Ovary (tissue), 10 donors: ENCODE measurements at regions of chr9 and their contacts with region 1.

Region 1: GRCh38 chr9:125746017-125746773 is 978 bp upstream of the PBX3 start:
- DNase-seq: peak; percentile 92 to 95 (median 94)
- H3K4me3 ChIP-seq: peak overlapping the region; percentile 77
- H3K27ac ChIP-seq: peak overlapping the region; percentile 87 to 90
- H3K4me1 ChIP-seq: no peaks in the 10 kb centered on the region
- H3K27me3 ChIP-seq: no peaks in the 10 kb centered on the region
- CTCF ChIP-seq: no peak
- EP300 ChIP-seq: no peak
- POLR2A ChIP-seq: peak; percentile 40

Region 2: GRCh38 chr9:125700791-125701190 is 45.4 kb before region 1 on chr9:
- intact Hi-C with region 1: no loop called
- DNase-seq: no peak
- H3K4me3 ChIP-seq: no peak overlapping the region
- H3K27ac ChIP-seq: no peak overlapping the region
- H3K4me1 ChIP-seq: peaks cover under 1% of the 10 kb centered on the region
- H3K27me3 ChIP-seq: no peaks in the 10 kb centered on the region
- CTCF ChIP-seq: no peak
- EP300 ChIP-seq: no peak
- POLR2A ChIP-seq: no peak

Region 3: GRCh38 chr9:125889476-125890419 is 143.6 kb after region 1 on chr9:
- intact Hi-C with region 1: loop called in 2 of 4 experiments (anchors 5 kb)
- DNase-seq: peak; percentile 41 to 72 (median 63)
- H3K4me3 ChIP-seq: peak overlapping the region; percentile 49
- H3K27ac ChIP-seq: peak overlapping the region; percentile 64 to 83
- H3K4me1 ChIP-seq: no peaks in the 10 kb centered on the region
- H3K27me3 ChIP-seq: no peaks in the 10 kb centered on the region
- CTCF ChIP-seq: no peak
- EP300 ChIP-seq: no peak
- POLR2A ChIP-seq: no peak

Region 4: GRCh38 chr9:126228781-126229444 is 482.7 kb after region 1 on chr9:
- intact Hi-C with region 1: loop called in 1 of 4 experiments (anchors 10 kb)
- DNase-seq: peak; percentile 66 to 85 (median 77)
- H3K4me3 ChIP-seq: no peak overlapping the region
- H3K27ac ChIP-seq: no peak overlapping the region
- H3K4me1 ChIP-seq: no peaks in the 10 kb centered on the region
- H3K27me3 ChIP-seq: no peaks in the 10 kb centered on the region
- CTCF ChIP-seq: peak; percentile 67 to 91 (median 82)
- EP300 ChIP-seq: no peak
- POLR2A ChIP-seq: no peak

Region 5: DNA sequence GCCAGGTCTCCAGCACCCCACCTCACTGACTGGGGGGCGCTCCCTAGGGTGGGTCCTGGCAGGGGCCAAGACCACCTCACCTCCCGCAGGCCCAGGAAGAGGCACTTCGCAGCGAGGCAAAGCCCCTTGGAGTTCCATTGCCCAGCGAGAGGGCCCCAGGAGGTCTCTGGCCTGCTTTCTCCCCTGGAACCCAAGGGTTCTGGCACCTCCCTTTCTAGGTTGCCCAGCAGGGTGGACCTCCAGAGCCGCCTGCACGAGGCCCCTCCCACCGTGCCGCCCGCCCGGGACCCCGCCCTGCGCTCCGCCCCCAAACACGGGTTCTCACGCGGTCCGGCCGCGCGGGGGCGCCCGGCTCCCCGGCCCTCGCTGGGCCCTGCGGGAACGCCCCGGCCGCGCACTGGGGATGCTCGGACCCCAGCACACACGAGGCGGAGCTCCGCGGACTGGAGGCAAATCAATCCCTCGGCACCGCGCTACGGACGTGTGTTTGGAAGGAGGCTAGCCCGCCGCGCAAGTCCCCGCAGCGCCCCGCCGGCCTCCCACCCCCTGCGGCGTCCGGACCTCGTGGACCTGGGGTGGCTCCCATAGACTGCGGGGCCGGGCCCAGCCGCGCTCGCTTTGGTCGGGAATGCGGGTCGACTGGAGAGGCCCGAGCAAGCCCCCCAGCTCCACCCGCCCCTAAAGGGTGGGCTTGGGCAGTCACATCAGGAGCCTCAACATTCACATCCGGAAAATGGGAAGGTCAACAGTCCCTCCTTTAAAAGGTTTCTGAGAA is 768.0 kb after region 1 on chr9:
- intact Hi-C with region 1: no loop called
- DNase-seq: peak; percentile 38 to 68 (median 51)
- H3K4me3 ChIP-seq: no peak overlapping the region
- H3K27ac ChIP-seq: no peak overlapping the region
- H3K4me1 ChIP-seq: no peaks in the 10 kb centered on the region
- H3K27me3 ChIP-seq: no peaks in the 10 kb centered on the region
- CTCF ChIP-seq: no peak
- EP300 ChIP-seq: no peak
- POLR2A ChIP-seq: no peak